Spleen (tissue), 13 donors: ENCODE measurements at regions of chr1 and their contacts with region 1.

Region 1: GRCh38 chr1:225766967-225767633 is 10.5 kb upstream of the SRP9 start:
- DNase-seq: no peak
- H3K4me3 ChIP-seq: no peak overlapping the region
- H3K27ac ChIP-seq: peak overlapping the region; percentile 42 to 76 (median 60)
- H3K4me1 ChIP-seq: peaks cover 23 to 89% (median 61%) of the 10 kb centered on the region in 6 donors
- H3K27me3 ChIP-seq: no peaks in the 10 kb centered on the region
- CTCF ChIP-seq: no peak
- POLR2A ChIP-seq: no peak

Region 2: GRCh38 chr1:225652729-225653462 is 114.2 kb before region 1 on chr1 and contains the start of gene ENAH:
- intact Hi-C with region 1: loop called (anchors 10 kb)
- DNase-seq: peak; percentile 88
- H3K4me3 ChIP-seq: peak within 1 kb of the TSS; percentile 53 to 90 (median 76)
- H3K27ac ChIP-seq: peak within 1 kb of the TSS; percentile 73 to 92 (median 88)
- H3K4me1 ChIP-seq: peaks cover 0 to 56% (median 27%) of the 10 kb centered on the region in 6 donors
- H3K27me3 ChIP-seq: peaks cover 0 to 41% (median 0%) of the 10 kb centered on the region in 7 donors
- CTCF ChIP-seq: no peak
- POLR2A ChIP-seq: no peak
- total RNA-seq, gene ENAH: 35.4 to 98.1 (median 55.4) TPM

Region 3: GRCh38 chr1:225720937-225721336 is 46.2 kb before region 1 on chr1:
- intact Hi-C with region 1: no loop called
- DNase-seq: no peak
- H3K4me3 ChIP-seq: no peak overlapping the region
- H3K27ac ChIP-seq: no peak overlapping the region
- H3K4me1 ChIP-seq: no peaks in the 10 kb centered on the region
- H3K27me3 ChIP-seq: no peaks in the 10 kb centered on the region
- CTCF ChIP-seq: no peak
- POLR2A ChIP-seq: no peak